HEK293 (cell line): ENCODE measurements at regions of chr17 and their contacts with region 1.

Region 1: GRCh38 chr17:50151041-50151936 is 812 bp upstream of the PPP1R9B start:
- H3K4me3 ChIP-seq: peak overlapping the region; percentile 77
- H3K27ac ChIP-seq: peak overlapping the region; percentile 93
- H3K4me1 ChIP-seq: peaks cover 15% of the 10 kb centered on the region
- CTCF ChIP-seq: peak; percentile 67

Region 2: DNA sequence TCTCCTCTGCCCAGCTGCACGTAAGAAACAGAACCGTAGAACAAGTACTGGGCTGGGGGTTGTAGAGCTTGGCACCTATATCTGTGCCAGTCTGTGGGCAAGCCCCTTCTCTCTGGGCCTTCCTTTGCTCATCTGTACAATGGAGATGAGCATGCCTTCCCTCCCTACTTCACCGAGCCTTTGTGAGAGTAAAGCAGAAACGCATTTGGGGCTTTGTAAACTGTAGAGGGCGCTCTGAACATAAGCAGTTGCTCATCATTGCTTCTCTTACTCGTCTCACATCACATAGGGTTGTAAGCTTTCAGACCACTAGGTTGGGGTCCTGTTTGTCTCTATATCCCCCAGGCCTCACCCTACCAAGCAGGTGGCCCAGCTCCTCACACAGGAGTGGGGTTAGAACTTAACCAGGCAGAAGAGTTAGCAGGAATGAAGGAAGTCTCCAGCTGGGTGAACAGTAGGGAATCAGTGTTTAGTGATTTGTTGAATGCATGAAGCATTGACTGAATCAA is 36.4 kb before region 1 on chr17:
- CTCF ChIA-PET with region 1: interaction called, 15 read pairs
- POLR2A ChIA-PET with region 1: interaction called, 5 read pairs
- H3K4me3 ChIP-seq: no peak overlapping the region
- H3K27ac ChIP-seq: no peak overlapping the region
- H3K4me1 ChIP-seq: no peaks in the 10 kb centered on the region; the same call in 1 of the 2 replicates
- CTCF ChIP-seq: peak; percentile 58

Region 3: DNA sequence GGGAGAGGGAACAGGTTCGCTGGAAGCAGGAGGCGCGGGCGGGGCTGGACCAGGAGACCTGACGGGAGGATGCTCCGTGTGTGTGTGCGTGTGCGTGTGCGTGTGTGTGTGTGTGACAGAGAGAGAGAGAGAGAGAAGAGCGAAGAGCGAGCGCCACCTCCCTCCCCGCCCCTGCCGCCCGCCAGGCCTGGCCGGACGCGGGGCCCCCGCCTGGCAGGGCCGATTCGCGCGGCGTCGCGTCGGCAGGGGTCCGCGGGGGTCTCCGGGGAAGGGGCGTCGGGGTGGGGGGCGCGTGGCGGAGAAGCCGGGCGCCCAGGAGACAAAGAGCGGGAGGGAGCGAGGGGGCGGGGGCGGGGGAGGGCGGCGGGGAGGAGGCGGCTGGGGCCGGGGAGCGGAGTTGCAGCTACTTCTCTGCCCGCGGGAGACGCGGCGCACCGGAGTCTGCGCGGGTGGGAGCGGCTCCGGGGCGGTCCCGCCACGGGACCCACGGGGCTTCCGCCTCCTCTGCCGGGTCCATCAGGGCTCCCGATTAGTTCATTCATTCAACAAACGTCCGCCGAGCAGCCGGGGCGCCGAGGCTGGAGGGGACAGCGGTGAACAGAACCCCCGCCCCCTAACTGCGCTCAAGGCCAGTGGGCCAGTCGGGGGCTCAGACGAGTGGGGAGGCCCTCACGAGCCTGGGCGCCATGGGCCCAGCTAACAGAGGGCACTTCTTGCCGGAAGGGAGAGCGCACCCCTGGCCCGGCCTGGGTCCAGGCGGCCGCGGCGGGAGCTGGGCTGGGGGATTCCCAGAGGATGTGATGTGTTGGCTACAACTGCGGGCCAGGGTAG is 21.3 kb before region 1 on chr17 and contains the start of gene SAMD14:
- CTCF ChIA-PET with region 1: interaction called, 7 read pairs
- POLR2A ChIA-PET with region 1: interaction called, 10 read pairs
- H3K4me3 ChIP-seq: peak within 1 kb of the TSS; percentile 35
- H3K27ac ChIP-seq: no peak within 1 kb of the TSS
- H3K4me1 ChIP-seq: no peaks in the 10 kb centered on the region
- CTCF ChIP-seq: no peak

Region 4: DNA sequence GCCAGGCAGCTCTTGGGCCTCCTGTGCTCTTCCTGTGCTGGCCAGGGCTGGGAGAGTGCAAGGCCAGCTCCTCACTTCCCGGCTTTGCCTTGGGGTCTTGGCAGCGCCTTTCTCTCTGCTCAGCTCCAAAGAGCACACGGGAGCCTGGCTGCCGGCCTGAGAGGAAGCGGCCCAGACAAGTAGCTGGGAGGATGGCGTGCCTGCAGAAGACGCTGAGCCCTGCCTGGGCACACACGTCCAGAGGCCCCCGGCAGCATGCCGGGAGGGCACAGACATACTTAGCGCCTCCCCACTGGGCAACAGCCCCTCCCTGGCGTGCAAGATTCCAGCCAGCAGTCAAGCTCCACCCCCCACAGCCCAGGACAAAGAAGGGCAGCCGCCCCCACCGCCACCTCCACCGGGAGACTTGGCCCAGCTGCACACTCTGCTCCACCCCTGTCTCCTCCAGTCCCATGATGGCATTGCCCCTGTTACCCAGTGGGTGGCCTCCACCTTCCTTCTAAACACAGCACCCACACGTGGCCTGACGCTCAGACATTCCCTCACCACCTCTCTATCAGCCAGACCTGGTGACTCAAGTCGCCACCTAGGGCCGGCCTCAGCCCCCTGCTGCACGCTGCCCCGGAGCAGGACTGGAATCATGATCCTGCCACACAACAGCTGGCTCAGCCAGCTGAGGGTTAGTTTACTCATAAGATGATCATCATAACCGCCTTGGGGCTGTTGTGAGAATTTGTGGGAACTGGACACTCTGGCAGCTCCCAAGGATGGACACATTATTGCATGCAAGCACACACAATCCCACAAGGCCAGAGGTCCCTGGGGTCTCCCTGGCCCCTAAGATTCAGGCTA is 26.9 kb after region 1 on chr17:
- CTCF ChIA-PET with region 1: interaction called, 16 read pairs
- POLR2A ChIA-PET with region 1: interaction called, 17 read pairs
- H3K4me3 ChIP-seq: no peak overlapping the region
- H3K27ac ChIP-seq: peak overlapping the region; percentile 76
- H3K4me1 ChIP-seq: peaks cover 11% of the 10 kb centered on the region
- CTCF ChIP-seq: peak; percentile 99

Region 5: GRCh38 chr17:50266303-50267073 is 115.2 kb after region 1 on chr17:
- CTCF ChIA-PET with region 1: no interaction called
- POLR2A ChIA-PET with region 1: no interaction called
- H3K4me3 ChIP-seq: no peak overlapping the region
- H3K27ac ChIP-seq: no peak overlapping the region; the same call in 1 of the 2 replicates
- H3K4me1 ChIP-seq: peaks cover 12% of the 10 kb centered on the region
- CTCF ChIP-seq: peak; percentile 37; the same call in 1 of the 2 replicates